ENCODE measurements at regions of chr7 and their contacts with region 1.

Region 1: DNA sequence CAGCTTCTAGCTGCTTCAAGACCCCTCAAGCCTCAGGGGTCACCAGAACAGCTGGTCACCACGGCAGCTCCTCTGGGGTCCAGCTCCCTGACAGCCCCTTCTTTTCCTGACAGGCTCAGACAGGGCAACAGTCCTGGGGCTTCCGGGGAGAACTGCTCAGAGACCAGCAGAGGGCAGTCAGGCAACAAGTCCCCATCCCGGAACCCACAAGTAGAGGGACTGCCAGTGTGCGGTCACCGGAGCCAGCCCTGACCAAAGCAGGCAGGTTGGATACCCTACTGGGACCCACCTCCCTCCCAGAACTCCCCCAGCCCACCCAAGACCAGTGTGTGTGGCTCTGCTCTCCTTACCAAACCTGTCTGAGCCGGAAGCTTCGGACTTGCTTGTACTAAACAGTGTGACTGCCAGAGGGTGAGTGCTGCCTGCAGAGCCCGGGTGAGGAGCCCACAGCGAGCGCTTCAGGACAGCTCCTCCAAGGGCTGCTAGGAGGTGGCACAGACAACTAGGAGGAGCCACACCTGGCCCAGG is 40.3 kb downstream of the YKT6 start:
- DNase-seq: peak; percentile 75
- ATAC-seq: peak; percentile 98
- H3K4me3 ChIP-seq: peak overlapping the region; percentile 39; the same call in 1 of the 2 replicates
- H3K27ac ChIP-seq: no peak overlapping the region
- H3K4me1 ChIP-seq: no peaks in the 10 kb centered on the region
- H3K27me3 ChIP-seq: no peaks in the 10 kb centered on the region
- CTCF ChIP-seq: peak; percentile 85

Region 2: DNA sequence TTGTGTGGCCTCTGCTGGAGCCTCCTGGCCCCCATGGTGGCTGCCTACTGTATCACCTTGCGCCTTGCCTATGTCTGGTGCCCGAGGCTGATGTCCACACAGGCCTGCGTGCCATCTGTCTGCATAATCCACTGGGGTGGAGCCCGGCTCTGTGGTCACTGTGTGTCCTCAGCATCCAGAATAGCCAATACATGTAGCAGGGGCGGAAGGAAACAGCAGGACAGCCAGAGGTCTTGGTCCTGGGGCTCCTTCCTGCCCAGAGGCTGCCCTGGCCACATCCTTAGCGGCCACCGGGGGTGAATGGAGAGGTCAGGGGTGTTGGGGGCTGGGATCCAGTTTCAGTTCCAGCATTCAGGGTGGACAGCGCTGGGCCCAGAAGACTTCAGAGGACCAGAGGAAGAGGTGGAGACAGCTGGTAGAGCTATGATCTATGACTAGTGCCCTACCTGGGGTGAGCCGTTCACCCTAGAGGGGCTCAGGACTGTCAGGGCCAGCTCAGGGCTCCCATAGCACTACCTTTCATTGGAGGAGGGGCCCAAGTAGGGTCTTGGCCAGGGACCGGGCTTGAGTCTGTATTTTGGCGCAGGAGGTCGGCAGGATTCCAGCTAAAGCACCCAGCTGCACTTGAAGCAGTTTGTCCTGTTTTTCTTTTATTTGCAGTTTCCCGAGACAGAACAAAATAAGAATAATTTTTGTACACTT is 24.4 kb before region 1 on chr7:
- CTCF ChIA-PET with region 1: no interaction called
- POLR2A ChIA-PET with region 1: no interaction called
- intact Hi-C with region 1: no loop called
- DNase-seq: no peak
- ATAC-seq: no peak
- H3K4me3 ChIP-seq: no peak overlapping the region
- H3K27ac ChIP-seq: no peak overlapping the region
- H3K4me1 ChIP-seq: no peaks in the 10 kb centered on the region
- H3K27me3 ChIP-seq: no peaks in the 10 kb centered on the region
- CTCF ChIP-seq: no peak

Region 3: GRCh38 chr7:44307301-44307900 is 66.4 kb after region 1 on chr7:
- CTCF ChIA-PET with region 1: interaction called, 4 read pairs
- POLR2A ChIA-PET with region 1: no interaction called
- intact Hi-C with region 1: loop called (anchors 1 kb)
- DNase-seq: peak; percentile 71
- ATAC-seq: peak; percentile 86
- H3K4me3 ChIP-seq: no peak overlapping the region
- H3K27ac ChIP-seq: no peak overlapping the region
- H3K4me1 ChIP-seq: 0 out of 2 replicates have a peak, but pooled peaks cover 2% of the 10 kb centered on the region
- H3K27me3 ChIP-seq: no peaks in the 10 kb centered on the region
- CTCF ChIP-seq: peak; percentile 60

Region 4: DNA sequence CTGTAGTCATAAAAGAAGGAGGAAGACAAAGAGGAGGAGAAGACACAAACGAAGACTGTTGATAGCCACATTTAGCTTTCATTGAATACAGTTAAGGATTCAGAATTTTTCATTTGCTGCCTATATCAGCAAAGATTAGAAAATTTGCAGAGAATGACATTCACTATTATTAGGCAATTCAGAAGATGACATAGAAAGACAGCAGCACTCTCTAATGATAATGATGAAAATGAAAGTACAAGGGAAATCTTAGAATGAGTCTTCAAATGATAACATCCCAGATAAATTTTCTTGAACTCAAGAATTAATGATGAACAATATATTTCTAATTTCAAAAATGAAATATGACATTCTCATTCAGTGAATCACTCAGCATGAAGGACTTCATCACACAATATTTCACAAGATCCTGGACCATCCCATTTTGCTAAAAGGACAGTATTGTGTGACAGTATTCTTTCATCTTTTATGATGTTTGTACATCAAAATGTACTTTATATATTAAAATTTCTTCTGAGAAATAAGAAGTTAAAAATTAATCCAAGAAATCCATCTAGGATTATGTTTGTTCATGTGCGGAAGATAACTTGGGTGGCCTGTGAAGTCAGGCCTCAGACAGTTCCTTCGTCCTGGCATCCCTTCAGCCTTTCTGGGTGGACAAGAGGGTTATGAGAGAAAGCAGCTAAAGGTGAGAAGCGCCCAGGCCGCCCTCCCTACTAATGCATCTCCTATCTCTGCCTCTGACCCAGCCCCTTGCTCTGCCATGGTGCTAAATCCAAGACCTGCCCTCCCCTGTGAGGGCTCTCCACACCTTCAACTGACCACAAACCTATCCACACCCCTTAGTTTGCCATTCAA is 131.7 kb after region 1 on chr7:
- CTCF ChIA-PET with region 1: no interaction called
- POLR2A ChIA-PET with region 1: no interaction called
- intact Hi-C with region 1: loop called (anchors 2 kb)
- DNase-seq: peak; percentile 61
- ATAC-seq: peak; percentile 31
- H3K4me3 ChIP-seq: no peak overlapping the region
- H3K27ac ChIP-seq: 0 out of 2 replicates have a peak overlapping the region, but pooled peaks have one; percentile 7
- H3K4me1 ChIP-seq: peaks cover 32% of the 10 kb centered on the region
- H3K27me3 ChIP-seq: no peaks in the 10 kb centered on the region
- CTCF ChIP-seq: no peak

Region 5: GRCh38 chr7:44477063-44477830 is 236.2 kb after region 1 on chr7:
- CTCF ChIA-PET with region 1: no interaction called
- POLR2A ChIA-PET with region 1: no interaction called
- intact Hi-C with region 1: loop called (anchors 1 kb)
- DNase-seq: peak; percentile 83
- ATAC-seq: peak; percentile 77
- H3K4me3 ChIP-seq: no peak overlapping the region
- H3K27ac ChIP-seq: no peak overlapping the region
- H3K4me1 ChIP-seq: peaks cover 26% of the 10 kb centered on the region
- H3K27me3 ChIP-seq: no peaks in the 10 kb centered on the region
- CTCF ChIP-seq: peak; percentile 92

Region 6: GRCh38 chr7:44565097-44565794 is 324.2 kb after region 1 on chr7:
- CTCF ChIA-PET with region 1: interaction called, 3 read pairs
- POLR2A ChIA-PET with region 1: no interaction called
- intact Hi-C with region 1: loop called (anchors 1 kb)
- DNase-seq: peak; percentile 66
- ATAC-seq: peak; percentile 65
- H3K4me3 ChIP-seq: no peak overlapping the region
- H3K27ac ChIP-seq: no peak overlapping the region
- H3K4me1 ChIP-seq: peaks cover 16% of the 10 kb centered on the region
- H3K27me3 ChIP-seq: no peaks in the 10 kb centered on the region
- CTCF ChIP-seq: peak; percentile 89

Region 7: DNA sequence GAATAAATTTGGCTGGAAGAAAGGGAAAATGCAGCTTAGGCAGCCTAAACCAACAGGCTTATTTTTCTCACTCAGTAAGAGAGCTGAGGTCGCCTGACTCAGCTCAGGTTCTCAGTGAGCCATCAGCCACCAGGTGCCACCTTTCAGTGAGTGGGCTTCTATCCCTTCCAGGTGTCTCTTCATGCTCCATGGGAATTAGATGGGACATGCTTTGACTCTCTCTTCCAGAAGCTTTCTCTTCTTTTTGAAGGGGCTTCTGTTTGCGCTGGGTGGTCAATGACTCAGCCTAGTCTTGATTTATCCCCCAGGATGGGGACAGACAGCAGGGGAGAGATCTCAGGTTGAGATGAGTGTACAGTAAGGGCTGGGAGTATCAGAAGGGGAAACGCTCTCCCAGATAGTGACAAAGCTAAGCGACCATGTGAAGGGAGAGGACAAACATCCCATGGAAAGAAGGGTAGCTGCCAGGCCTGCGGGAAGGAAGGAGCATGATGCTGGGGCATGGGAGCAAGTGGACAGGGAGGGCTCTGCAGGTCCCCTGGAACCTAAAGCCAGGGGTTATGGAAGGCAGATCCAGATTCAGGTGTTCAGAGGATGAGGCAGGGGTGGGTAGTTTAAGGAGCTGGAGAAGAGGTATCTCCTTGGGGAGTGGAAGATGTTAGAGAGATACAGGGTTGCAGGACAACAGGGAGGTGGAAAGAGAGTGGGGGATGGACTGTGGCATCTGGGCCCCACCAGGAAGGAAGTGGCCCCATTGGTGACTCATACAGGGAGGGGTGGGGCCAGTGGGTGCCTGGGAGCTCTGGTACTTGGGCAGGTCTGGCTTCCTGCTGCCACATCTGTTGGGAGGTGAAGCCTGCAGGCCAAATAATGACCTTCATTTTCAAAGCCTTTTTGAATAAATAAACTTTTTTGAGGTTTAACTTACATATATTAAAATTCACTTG is 397.8 kb after region 1 on chr7:
- CTCF ChIA-PET with region 1: no interaction called
- POLR2A ChIA-PET with region 1: no interaction called
- intact Hi-C with region 1: no loop called
- DNase-seq: peak; percentile 82
- ATAC-seq: peak; percentile 84
- H3K4me3 ChIP-seq: no peak overlapping the region
- H3K27ac ChIP-seq: peak overlapping the region; percentile 98
- H3K4me1 ChIP-seq: peaks cover 51% of the 10 kb centered on the region
- H3K27me3 ChIP-seq: no peaks in the 10 kb centered on the region
- CTCF ChIP-seq: no peak

Measured in PC-3 (cell line).